Upper lobe of right lung (tissue), 1 donor: ENCODE measurements at regions of chr6 and their contacts with region 1.

Region 1: GRCh38 chr6:89432875-89433251 is at the start of gene ANKRD6:
- DNase-seq: peak; percentile 91
- ATAC-seq: peak; percentile 99
- H3K4me3 ChIP-seq: peak within 1 kb of the TSS; percentile 89
- H3K27ac ChIP-seq: peak within 1 kb of the TSS; percentile 47
- H3K4me1 ChIP-seq: peaks cover 13% of the 10 kb centered on the region
- H3K27me3 ChIP-seq: no peaks in the 10 kb centered on the region
- CTCF ChIP-seq: peak; percentile 85
- total RNA-seq, gene ANKRD6: 20.2 TPM

Region 2: DNA sequence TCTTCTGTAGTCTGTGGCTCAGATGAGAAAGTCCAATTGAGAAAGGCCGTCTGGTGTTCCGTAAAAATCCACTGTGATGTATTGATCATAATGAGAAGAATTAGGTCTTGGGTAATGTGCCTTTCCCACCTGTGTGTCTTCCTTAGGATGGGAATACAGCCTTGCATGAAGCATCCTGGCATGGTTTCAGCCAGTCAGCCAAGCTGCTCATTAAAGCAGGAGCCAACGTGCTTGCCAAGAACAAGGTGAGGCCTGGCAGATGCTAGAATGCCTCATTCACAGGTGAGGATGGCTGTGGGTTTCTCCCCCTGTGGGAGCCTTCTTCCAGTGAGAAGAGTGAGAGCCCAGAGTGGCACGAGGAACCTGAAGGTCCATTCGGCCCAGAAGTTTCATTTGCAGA is 173.0 kb after region 1 on chr6:
- intact Hi-C with region 1: loop called (anchors 5 kb)
- DNase-seq: no peak
- ATAC-seq: no peak
- H3K4me3 ChIP-seq: no peak overlapping the region
- H3K27ac ChIP-seq: no peak overlapping the region
- H3K4me1 ChIP-seq: no peaks in the 10 kb centered on the region
- H3K27me3 ChIP-seq: no peaks in the 10 kb centered on the region
- CTCF ChIP-seq: no peak